ENCODE measurements at regions of chr6 and their contacts with region 1.

Region 1: GRCh38 chr6:44257025-44257752 is at the start of gene SLC35B2:
- DNase-seq: peak; percentile 79
- CTCF ChIP-seq: peak; percentile 89

Region 2: GRCh38 chr6:44068607-44069296 is 188.4 kb before region 1 on chr6:
- CTCF ChIA-PET with region 1: no interaction called
- POLR2A ChIA-PET with region 1: no interaction called
- DNase-seq: no peak
- CTCF ChIP-seq: no peak

Region 3: GRCh38 chr6:44246663-44247337 is 10.4 kb before region 1 on chr6 and contains the start of gene HSP90AB1:
- CTCF ChIA-PET with region 1: interaction called, 16 read pairs
- POLR2A ChIA-PET with region 1: interaction called, 56 read pairs
- DNase-seq: peak; percentile 93
- CTCF ChIP-seq: no peak

Region 4: DNA sequence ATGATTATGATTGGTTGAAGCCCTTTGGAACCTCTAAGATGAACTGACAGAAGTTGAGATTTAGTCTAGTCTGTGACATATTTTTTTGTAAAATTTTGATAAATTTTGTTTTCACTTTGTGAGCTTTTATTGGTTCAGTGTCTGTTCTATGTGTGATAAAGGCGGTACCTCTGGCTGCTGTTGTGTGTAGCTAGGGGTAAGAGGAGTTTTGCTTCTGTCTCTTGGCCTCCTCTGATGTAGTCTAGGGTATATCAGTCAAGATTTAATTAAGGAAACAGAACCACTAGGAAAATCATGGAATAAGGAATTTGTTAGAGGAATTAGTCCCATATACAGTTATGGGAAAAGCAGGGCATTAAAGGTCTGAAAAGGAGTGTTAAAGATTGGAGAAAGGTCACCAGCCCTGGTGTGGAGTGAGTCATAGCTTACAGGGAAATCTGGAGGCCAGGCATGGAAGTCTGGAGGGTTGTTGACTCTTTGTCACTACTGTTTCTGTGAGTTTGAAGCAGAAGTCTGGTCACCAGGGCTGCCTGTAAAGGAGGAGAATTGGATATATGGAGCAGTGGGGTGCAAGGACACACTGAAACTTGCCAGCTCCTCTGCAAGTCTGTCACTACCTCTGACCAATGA is 158.8 kb after region 1 on chr6:
- CTCF ChIA-PET with region 1: no interaction called
- POLR2A ChIA-PET with region 1: no interaction called
- DNase-seq: no peak
- CTCF ChIP-seq: no peak

Region 5: DNA sequence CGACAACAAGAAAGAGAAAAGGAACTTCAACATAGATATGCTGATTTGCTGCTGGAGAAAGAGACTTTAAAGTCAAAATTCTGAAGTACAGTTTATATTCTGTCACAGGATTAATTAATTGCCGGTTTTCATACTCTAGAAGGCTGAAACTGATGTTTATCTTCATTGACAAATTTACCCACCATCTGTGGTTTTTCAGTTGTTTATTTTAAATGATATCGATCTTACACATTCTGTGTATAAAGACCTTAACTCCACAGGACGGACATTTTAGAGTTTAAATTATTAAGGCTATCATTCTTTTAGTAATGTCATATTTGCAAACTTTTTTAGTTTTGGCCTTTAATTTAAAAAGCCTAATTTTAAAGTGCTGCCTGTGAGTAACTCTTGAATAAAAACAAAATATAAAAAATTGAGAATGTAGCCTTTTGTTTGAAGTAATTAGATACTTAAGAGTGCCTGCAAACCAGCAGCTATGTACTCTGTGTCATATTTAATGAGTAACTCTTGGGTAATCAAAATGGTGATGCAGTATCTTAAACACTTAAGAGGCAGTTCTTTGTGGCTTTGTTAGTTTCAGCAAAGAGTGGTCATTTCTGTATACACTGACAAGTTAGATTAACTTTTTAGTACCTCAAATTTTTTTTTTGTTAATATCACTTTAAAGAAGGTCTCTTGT is 189.6 kb after region 1 on chr6:
- CTCF ChIA-PET with region 1: no interaction called
- POLR2A ChIA-PET with region 1: no interaction called
- DNase-seq: no peak
- CTCF ChIP-seq: no peak